ENCODE measurements at regions of chr15 and their contacts with region 1.

Region 1: DNA sequence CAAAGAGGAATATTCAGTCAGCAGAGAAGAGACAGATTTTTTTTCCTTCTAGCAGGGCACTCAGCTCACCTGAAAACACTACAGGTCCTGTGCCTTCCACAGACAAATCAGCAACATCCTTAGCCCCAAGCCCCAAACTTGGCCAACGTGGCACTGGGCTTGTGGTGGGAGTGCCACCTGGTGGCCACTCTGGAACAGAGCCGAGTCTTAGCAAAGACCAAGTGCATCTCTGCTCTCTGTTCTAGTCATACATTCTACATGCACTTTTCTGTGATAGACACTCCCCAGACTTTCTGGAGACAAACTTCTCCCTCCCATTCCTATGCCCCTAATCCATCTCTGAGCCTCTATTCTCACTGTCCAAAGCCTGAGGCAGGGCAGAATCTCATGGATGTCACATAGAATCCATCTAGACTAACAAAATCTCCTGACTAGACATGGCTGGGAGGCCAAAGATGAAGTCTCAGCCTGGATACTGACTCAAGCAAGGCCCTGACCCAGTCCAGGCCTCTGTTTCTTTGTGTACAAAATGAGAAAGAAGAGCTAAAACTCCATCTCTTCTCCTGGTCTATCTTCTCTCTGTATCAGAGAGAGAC is 5.1 kb upstream of the SEMA7A start:
- DNase-seq: peak; percentile 67
- H3K4me3 Mint-ChIP-seq: no peak overlapping the region
- H3K27ac Mint-ChIP-seq: peak overlapping the region; percentile 35
- H3K4me1 Mint-ChIP-seq: peaks cover 39% of the 10 kb centered on the region
- H3K27me3 Mint-ChIP-seq: no peaks in the 10 kb centered on the region

Region 2: GRCh38 chr15:74382004-74382816 is 56.6 kb before region 1 on chr15:
- intact Hi-C with region 1: loop called (anchors 1 kb)
- DNase-seq: peak; percentile 70
- H3K4me3 Mint-ChIP-seq: no peak overlapping the region
- H3K27ac Mint-ChIP-seq: peak overlapping the region; percentile 64
- H3K4me1 Mint-ChIP-seq: peaks cover 63% of the 10 kb centered on the region
- H3K27me3 Mint-ChIP-seq: no peaks in the 10 kb centered on the region

Region 3: DNA sequence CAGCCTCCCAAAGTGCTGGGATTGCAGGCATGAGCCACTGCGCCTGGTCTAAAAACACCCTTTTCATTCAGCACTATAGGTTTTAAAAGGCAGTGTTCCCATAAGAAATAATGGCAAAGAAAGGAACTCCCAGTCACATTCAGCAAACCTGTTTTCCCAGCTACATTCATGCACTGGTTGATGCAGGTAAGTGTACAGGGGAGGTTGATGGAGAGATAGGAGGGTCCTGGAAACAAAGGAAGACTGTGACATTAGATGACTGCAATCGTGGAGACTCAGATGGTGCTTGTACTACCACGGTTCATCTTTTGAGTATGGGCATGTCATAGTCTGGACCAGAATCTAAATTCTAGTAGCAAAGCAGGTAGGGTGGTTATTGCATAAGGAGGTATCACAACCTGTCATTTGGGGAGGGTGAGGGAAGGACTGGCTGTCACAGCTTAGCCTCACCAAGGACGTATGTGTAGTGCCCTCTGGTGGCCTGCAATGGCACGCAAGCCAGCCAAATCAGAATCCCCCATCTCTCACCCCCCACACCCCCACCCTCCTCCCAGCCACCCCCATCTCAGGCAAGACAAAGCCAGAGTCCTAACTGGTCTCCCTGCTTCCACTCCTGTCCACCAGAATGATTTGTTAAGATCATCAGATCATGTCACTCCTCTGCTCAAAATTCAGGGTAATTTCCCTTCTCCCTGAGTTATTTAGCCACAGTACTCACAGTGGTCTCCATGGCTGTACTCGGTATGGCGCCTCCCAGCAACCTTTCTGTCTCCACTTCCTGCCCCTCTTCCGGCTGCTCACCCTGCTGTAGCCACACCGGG is 50.9 kb after region 1 on chr15:
- intact Hi-C with region 1: loop called (anchors 2 kb)
- DNase-seq: peak; percentile 67
- H3K4me3 Mint-ChIP-seq: no peak overlapping the region
- H3K27ac Mint-ChIP-seq: peak overlapping the region; percentile 71
- H3K4me1 Mint-ChIP-seq: peaks cover 16% of the 10 kb centered on the region
- H3K27me3 Mint-ChIP-seq: no peaks in the 10 kb centered on the region

Measured in activated T-helper 2 cell treated with anti-CD3 and anti-CD28 coated beads, Interferon-gamma antibody, Interleukin-2, Interleukin-4, amounts not matched to agents 10 μg/mL and 5 μg/mL and 100 μg/mL, durations not matched to agents 14 hours and 24 hours and 36 hours (primary cell).